Calu3 (cell line): ENCODE measurements at regions of chr5 and their contacts with region 1.

Region 1: DNA sequence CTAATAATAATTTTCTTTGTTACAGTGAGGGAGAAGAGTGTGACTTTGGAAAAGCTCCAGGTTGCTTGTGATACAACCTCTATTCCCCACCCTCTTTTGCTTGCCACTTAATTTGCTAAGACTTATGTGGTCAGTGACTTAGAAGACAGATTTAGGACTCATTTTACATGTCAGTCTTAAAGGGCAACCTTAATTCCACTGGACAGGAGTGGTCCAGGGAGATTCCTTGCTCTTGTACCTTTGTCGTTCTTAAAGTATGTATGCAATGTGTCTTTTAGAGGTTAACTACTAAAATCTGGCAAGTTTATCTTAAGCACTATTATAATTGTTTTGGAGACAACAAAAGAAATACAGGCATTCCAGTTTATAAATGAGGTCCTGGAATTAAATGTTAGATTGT is 20.0 kb downstream of the SLC30A5 start:
- DNase-seq: no peak
- H3K4me3 Mint-ChIP-seq: no peak overlapping the region
- H3K27ac Mint-ChIP-seq: no peak overlapping the region
- H3K4me1 Mint-ChIP-seq: no peaks in the 10 kb centered on the region
- H3K27me3 Mint-ChIP-seq: no peaks in the 10 kb centered on the region
- CTCF ChIP-seq: no peak

Region 2: GRCh38 chr5:69334793-69335268 is 221.0 kb after region 1 on chr5:
- CTCF ChIA-PET with region 1: interaction called, 10 read pairs
- intact Hi-C with region 1: no loop called
- DNase-seq: peak; percentile 90
- H3K4me3 Mint-ChIP-seq: no peak overlapping the region
- H3K27ac Mint-ChIP-seq: no peak overlapping the region
- H3K4me1 Mint-ChIP-seq: peaks cover 28% of the 10 kb centered on the region
- H3K27me3 Mint-ChIP-seq: no peaks in the 10 kb centered on the region
- CTCF ChIP-seq: peak; percentile 67